ENCODE measurements at regions of chr14 and their contacts with region 1.

Region 1: DNA sequence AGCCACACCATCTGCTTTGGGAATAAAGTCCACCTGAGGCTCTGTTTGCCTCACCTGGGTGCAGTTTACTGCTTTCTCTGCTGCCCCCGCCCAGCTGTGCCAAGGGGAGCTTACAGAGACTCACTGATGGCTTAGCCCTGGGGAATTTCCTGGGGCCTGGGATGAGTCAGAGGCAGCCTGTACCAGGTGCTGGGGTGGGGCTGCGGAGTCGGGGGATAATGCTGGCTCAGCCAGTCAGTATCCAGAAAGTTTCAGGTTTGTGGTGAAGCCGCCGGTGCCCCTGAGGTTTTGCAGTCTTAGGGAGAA is 22.3 kb downstream of the PLEKHG3 start:
- DNase-seq: no peak

Region 2: GRCh38 chr14:64764641-64765520 is 38.3 kb after region 1 on chr14:
- intact Hi-C with region 1: loop called in 1 of 2 experiments (anchors 5 kb)
- DNase-seq: peak; percentile 90

Measured in posterior vena cava (tissue), 2 donors.